Activated CD4-positive, alpha-beta T cell treated with anti-CD3 and anti-CD28 coated beads, Interleukin-2, amount 10 ng/mL, durations not matched to agents 7 days and 5 days (primary cell): ENCODE measurements at regions of chr17 and their contacts with region 1.

Region 1: GRCh38 chr17:3738562-3739295 is 15.0 kb downstream of the HASPIN start:
- DNase-seq: peak; percentile 60
- H3K4me3 Mint-ChIP-seq: no peak overlapping the region
- H3K27ac Mint-ChIP-seq: peak overlapping the region; percentile 33
- H3K4me1 Mint-ChIP-seq: peaks cover 40% of the 10 kb centered on the region
- H3K27me3 Mint-ChIP-seq: no peaks in the 10 kb centered on the region

Region 2: GRCh38 chr17:3723556-3724369 is 15.0 kb before region 1 on chr17 and contains the start of gene HASPIN:
- CTCF ChIA-PET with region 1: interaction called, 40 read pairs
- POLR2A ChIA-PET with region 1: no interaction called
- DNase-seq: peak; percentile 94
- H3K4me3 Mint-ChIP-seq: peak within 1 kb of the TSS; percentile 95
- H3K27ac Mint-ChIP-seq: peak within 1 kb of the TSS; percentile 89
- H3K4me1 Mint-ChIP-seq: peaks cover 65% of the 10 kb centered on the region
- H3K27me3 Mint-ChIP-seq: no peaks in the 10 kb centered on the region
- total RNA-seq, gene HASPIN: 27.6 to 31.2 TPM

Region 3: GRCh38 chr17:3777366-3778120 is 38.8 kb after region 1 on chr17:
- CTCF ChIA-PET with region 1: interaction called, 15 read pairs
- POLR2A ChIA-PET with region 1: no interaction called
- DNase-seq: no peak
- H3K4me3 Mint-ChIP-seq: no peak overlapping the region
- H3K27ac Mint-ChIP-seq: no peak overlapping the region
- H3K4me1 Mint-ChIP-seq: no peaks in the 10 kb centered on the region
- H3K27me3 Mint-ChIP-seq: peaks cover 6% of the 10 kb centered on the region

Region 4: DNA sequence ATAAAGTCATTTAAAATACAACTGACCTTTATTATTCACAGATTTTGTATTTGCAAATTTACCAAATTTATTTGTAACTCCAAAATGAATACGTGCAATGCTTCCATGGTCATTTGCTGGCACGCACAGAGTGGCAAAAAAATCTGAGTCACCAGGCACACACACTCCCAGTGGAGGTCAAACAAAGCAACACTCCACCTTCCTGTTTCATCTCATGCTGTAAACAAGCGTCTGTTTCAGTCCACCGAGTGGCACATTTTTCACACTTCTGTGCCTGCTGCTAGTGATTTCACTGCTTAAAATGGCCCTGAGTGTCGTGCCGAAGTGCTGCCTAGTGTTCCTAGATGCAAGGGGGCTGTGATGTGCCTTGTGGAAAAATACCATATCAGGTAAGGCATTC is 80.1 kb after region 1 on chr17:
- CTCF ChIA-PET with region 1: interaction called, 18 read pairs
- POLR2A ChIA-PET with region 1: no interaction called
- DNase-seq: no peak
- H3K4me3 Mint-ChIP-seq: no peak overlapping the region
- H3K27ac Mint-ChIP-seq: no peak overlapping the region
- H3K4me1 Mint-ChIP-seq: no peaks in the 10 kb centered on the region
- H3K27me3 Mint-ChIP-seq: no peaks in the 10 kb centered on the region

Region 5: GRCh38 chr17:3845621-3846441 is 107.1 kb after region 1 on chr17 and contains the start of gene NCBP3:
- CTCF ChIA-PET with region 1: interaction called, 64 read pairs
- POLR2A ChIA-PET with region 1: no interaction called
- DNase-seq: peak; percentile 89
- H3K4me3 Mint-ChIP-seq: peak within 1 kb of the TSS; percentile 96
- H3K27ac Mint-ChIP-seq: peak within 1 kb of the TSS; percentile 93
- H3K4me1 Mint-ChIP-seq: peaks cover 26% of the 10 kb centered on the region
- H3K27me3 Mint-ChIP-seq: peaks cover 10% of the 10 kb centered on the region
- total RNA-seq, gene NCBP3: 43.6 to 43.7 TPM